CD4-positive, alpha-beta memory T cell (primary cell): ENCODE measurements at regions of chr7 and their contacts with region 1.

Region 1: DNA sequence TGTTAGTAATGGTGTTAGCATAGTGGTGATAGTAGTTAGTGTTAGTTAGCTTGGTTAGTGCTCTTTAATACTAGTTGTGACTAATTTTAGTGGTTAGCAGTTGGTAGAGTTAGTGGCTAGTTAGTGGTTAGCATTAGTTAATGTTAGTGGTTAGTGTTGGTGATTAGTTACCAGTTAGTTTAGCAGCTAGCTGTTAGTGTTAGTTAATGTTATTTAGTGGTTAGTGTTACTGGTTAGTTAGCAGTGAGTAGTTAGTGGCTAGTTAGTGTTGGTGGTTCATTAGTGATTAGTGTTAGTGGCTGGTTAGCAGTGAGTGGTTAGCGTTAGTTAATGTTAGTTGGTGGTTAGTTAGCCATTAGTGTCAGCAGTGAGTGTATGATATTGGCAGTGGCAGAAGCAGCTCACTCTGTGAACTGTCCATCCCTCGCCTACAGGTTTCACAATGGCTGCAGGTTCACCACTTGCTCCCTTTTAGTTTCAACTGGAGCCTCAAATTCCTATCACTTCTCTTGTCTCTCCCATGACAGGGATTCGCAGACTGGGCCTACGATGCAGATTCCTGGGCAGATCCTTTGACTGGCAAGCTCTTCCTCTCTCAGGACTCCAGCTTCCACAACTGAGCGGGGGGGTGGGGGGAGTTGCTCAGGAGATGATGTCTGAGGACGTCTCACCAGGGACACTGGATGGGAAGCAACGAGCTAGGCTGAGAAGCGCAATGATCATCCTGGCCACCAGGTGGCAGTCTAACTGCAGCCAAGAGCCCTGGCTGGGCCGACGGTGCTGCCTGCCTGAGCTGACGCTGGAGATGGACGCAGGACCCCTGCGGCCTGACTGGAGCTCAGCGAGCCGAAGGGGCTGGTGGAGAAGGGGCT is 19.5 kb downstream of the GHRHR start:
- DNase-seq: peak; percentile 40 to 66 (median 56)
- H3K4me3 ChIP-seq: no peak overlapping the region
- H3K4me3 Mint-ChIP-seq: peak overlapping the region in 5 of 8 donors; percentile 20 to 67 (median 54)
- H3K27ac ChIP-seq: no peak overlapping the region
- H3K27ac Mint-ChIP-seq: peak overlapping the region in 2 of 7 donors; percentile 21 to 26
- H3K4me1 ChIP-seq: peaks cover 4% of the 10 kb centered on the region
- H3K4me1 Mint-ChIP-seq: peaks cover 9 to 38% (median 12%) of the 10 kb centered on the region in 4 donors
- H3K27me3 ChIP-seq: no peaks in the 10 kb centered on the region
- H3K27me3 Mint-ChIP-seq: peaks cover 23 to 25% of the 10 kb centered on the region in 2 donors

Region 2: DNA sequence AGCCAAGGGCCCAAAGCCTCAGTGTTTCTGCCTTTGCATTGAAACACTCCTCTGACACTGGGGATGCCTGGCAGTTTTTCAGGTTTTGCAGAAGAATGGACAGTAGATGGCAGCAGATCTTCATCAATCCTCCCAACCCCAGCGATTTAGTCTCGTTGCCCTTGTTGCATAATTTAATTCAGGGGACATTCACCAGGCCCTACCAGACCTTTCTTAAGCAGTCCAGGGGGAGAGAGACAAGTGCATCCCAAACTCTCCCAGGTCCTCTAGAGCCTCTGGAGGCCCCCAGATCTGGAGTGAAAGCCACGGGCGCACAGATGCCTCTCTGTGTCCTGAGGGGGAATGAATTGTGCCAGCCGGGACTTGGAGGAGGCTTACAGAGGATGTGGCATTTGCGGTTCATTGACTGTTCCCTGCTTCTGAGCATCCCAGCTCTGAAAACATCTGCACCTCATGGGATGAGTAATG is 182.5 kb before region 1 on chr7:
- CTCF ChIA-PET with region 1: interaction called, 5 read pairs
- POLR2A ChIA-PET with region 1: no interaction called
- intact Hi-C with region 1: loop called (anchors 2 kb)
- DNase-seq: peak in 4 of 5 donors; percentile 20 to 32 (median 29)
- H3K4me3 ChIP-seq: no peak overlapping the region
- H3K4me3 Mint-ChIP-seq: peak overlapping the region in 1 of 8 donors; percentile 13
- H3K27ac ChIP-seq: no peak overlapping the region
- H3K27ac Mint-ChIP-seq: no peak overlapping the region
- H3K4me1 ChIP-seq: peaks cover 5% of the 10 kb centered on the region
- H3K4me1 Mint-ChIP-seq: peaks cover 0 to 5% (median 1%) of the 10 kb centered on the region in 4 donors
- H3K27me3 ChIP-seq: no peaks in the 10 kb centered on the region
- H3K27me3 Mint-ChIP-seq: no peaks in the 10 kb centered on the region

Region 3: DNA sequence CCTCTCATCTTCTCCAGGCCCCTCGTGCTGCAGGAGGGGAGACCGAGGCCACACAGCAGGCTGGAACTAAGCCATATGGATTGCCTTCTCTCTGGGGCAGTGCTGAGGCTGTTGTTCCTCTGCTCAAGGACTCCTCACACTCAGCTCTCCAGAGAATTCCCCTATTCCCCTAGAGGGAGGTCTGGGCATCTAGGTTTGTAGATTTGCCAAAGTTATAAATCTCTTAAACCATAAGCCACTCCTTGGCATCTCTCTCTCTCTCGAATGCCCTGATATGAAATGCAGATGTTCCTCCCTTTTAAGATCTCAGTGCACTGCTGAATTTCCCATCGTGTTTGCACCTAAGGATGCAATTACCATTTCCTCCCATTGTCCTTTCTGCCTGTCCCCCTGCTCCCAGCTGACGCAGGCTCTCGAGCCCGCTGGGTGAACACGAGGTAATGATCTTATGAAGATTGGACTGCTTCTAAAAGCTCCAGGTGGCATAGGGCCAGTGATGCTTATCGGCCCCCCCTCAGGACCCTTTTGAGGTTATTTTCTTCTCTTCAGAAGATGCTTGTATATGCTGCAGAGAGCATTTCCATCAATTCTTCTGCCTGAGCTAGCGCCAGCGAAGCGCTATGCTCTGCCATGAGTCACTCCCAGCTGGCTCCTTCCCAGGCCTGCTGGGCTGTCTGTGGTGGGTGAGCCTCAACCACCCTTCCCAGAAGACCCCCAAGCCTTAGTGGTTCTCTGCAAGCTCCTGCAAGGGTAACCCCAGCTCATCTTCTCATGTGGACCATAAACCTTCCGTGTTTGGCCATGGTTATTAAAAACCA is 113.3 kb before region 1 on chr7:
- CTCF ChIA-PET with region 1: no interaction called
- POLR2A ChIA-PET with region 1: no interaction called
- intact Hi-C with region 1: no loop called
- DNase-seq: no peak
- H3K4me3 ChIP-seq: no peak overlapping the region
- H3K4me3 Mint-ChIP-seq: no peak overlapping the region
- H3K27ac ChIP-seq: no peak overlapping the region
- H3K27ac Mint-ChIP-seq: no peak overlapping the region
- H3K4me1 ChIP-seq: no peaks in the 10 kb centered on the region
- H3K4me1 Mint-ChIP-seq: no peaks in the 10 kb centered on the region
- H3K27me3 ChIP-seq: no peaks in the 10 kb centered on the region
- H3K27me3 Mint-ChIP-seq: no peaks in the 10 kb centered on the region

Region 4: GRCh38 chr7:30996256-30996655 is 13.0 kb after region 1 on chr7:
- CTCF ChIA-PET with region 1: interaction called, 39 read pairs
- POLR2A ChIA-PET with region 1: no interaction called
- intact Hi-C with region 1: no loop called
- DNase-seq: no peak
- H3K4me3 ChIP-seq: no peak overlapping the region
- H3K4me3 Mint-ChIP-seq: no peak overlapping the region
- H3K27ac ChIP-seq: no peak overlapping the region
- H3K27ac Mint-ChIP-seq: peak overlapping the region in 1 of 7 donors; percentile 42
- H3K4me1 ChIP-seq: no peaks in the 10 kb centered on the region
- H3K4me1 Mint-ChIP-seq: no peaks in the 10 kb centered on the region
- H3K27me3 ChIP-seq: no peaks in the 10 kb centered on the region
- H3K27me3 Mint-ChIP-seq: no peaks in the 10 kb centered on the region

Region 5: DNA sequence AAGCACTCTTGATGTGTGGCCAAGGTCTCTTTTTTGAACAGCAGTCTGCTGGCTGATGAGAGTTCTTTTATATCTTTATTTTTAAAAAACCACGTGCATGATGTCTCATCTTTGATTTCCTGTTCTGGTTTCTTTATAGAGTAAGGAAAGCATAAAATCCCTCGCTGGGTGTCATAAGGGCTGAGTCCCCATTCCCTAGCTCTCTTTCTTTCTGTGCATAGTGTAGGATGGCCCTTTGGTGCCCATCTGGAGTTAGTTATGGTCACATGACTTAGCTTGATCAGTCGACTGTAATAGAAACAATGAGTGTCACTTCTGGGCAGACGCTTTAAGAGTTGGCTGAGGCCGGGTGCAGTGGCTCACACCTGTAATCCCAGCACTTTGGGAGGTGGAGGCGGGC is 19.0 kb after region 1 on chr7:
- CTCF ChIA-PET with region 1: interaction called, 11 read pairs
- POLR2A ChIA-PET with region 1: no interaction called
- intact Hi-C with region 1: no loop called
- DNase-seq: no peak
- H3K4me3 ChIP-seq: no peak overlapping the region
- H3K4me3 Mint-ChIP-seq: no peak overlapping the region
- H3K27ac ChIP-seq: no peak overlapping the region
- H3K27ac Mint-ChIP-seq: no peak overlapping the region
- H3K4me1 ChIP-seq: no peaks in the 10 kb centered on the region
- H3K4me1 Mint-ChIP-seq: peaks cover 0 to 1% (median 0%) of the 10 kb centered on the region in 4 donors
- H3K27me3 ChIP-seq: no peaks in the 10 kb centered on the region
- H3K27me3 Mint-ChIP-seq: no peaks in the 10 kb centered on the region

Region 6: GRCh38 chr7:31122649-31123058 is 139.4 kb after region 1 on chr7:
- CTCF ChIA-PET with region 1: interaction called, 136 read pairs
- POLR2A ChIA-PET with region 1: interaction called, 6 read pairs
- intact Hi-C with region 1: no loop called
- DNase-seq: peak in 4 of 5 donors; percentile 14 to 34 (median 21)
- H3K4me3 ChIP-seq: no peak overlapping the region
- H3K4me3 Mint-ChIP-seq: no peak overlapping the region
- H3K27ac ChIP-seq: no peak overlapping the region
- H3K27ac Mint-ChIP-seq: no peak overlapping the region
- H3K4me1 ChIP-seq: no peaks in the 10 kb centered on the region
- H3K4me1 Mint-ChIP-seq: no peaks in the 10 kb centered on the region
- H3K27me3 ChIP-seq: no peaks in the 10 kb centered on the region
- H3K27me3 Mint-ChIP-seq: peaks cover 0 to 16% of the 10 kb centered on the region in 2 donors